ENCODE measurements at regions of chr4 and their contacts with region 1.

Region 1: GRCh38 chr4:26330186-26330787 is 9.5 kb downstream of the RBPJ start:
- DNase-seq: peak; percentile 53
- ATAC-seq: peak; percentile 82
- H3K4me3 ChIP-seq: no peak overlapping the region
- H3K27ac ChIP-seq: no peak overlapping the region
- H3K4me1 ChIP-seq: peaks cover 0 to 16% of the 10 kb centered on the region in 2 experiments; a peak in 2 of 4 replicates
- H3K27me3 ChIP-seq: no peaks in the 10 kb centered on the region
- CTCF ChIP-seq: peak; percentile 50 to 77 (median 54); a peak in 4 of 6 replicates
- POLR2A ChIP-seq: no peak
- RAD21 ChIP-seq: peak; percentile 64

Region 2: GRCh38 chr4:25925486-25926201 is 404.6 kb before region 1 on chr4:
- CTCF ChIA-PET with region 1: no interaction called
- POLR2A ChIA-PET with region 1: no interaction called
- RAD21 ChIA-PET with region 1: no interaction called
- intact Hi-C with region 1: loop called (anchors 10 kb)
- DNase-seq: peak; percentile 35
- ATAC-seq: peak; percentile 87
- H3K4me3 ChIP-seq: no peak overlapping the region
- H3K27ac ChIP-seq: no peak overlapping the region
- H3K4me1 ChIP-seq: no peaks in the 10 kb centered on the region
- H3K27me3 ChIP-seq: no peaks in the 10 kb centered on the region
- CTCF ChIP-seq: peak; percentile 43 to 72 (median 72); a peak in 5 of 6 replicates
- POLR2A ChIP-seq: no peak
- RAD21 ChIP-seq: peak; percentile 68

Region 3: DNA sequence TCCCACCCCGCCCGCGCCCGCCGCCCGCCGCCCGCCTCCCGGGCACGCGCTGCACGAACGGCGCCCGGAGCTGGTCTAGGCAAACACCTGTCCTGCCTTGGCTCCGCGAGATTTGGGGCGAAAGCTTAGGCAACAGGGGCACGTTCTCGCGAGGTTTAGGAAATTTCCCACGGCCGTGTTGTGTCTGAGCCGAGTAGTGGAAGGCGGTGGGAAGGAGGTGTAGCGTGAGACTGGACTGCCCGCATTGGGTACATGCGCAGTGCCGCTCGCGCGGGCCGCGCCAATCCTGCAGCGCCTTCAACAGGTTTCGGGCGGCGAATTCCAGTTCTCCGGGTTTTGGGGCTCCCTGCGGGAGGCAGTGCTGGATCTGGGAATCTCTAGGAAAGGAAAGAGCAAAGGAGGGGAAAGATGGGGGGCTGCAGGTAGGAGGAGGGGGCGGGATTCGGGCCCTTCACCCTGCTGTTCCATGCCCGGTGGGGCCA is 10.8 kb before region 1 on chr4:
- CTCF ChIA-PET with region 1: interaction called, 10 read pairs
- POLR2A ChIA-PET with region 1: interaction called, 3 read pairs
- RAD21 ChIA-PET with region 1: no interaction called
- intact Hi-C with region 1: no loop called
- DNase-seq: peak; percentile 99
- ATAC-seq: peak; percentile 78
- H3K4me3 ChIP-seq: peak overlapping the region; percentile 79 to 93
- H3K27ac ChIP-seq: peak overlapping the region; percentile 89
- H3K4me1 ChIP-seq: peaks cover 9 to 39% of the 10 kb centered on the region in 2 experiments; a peak in 3 of 4 replicates
- H3K27me3 ChIP-seq: no peaks in the 10 kb centered on the region
- CTCF ChIP-seq: no peak
- POLR2A ChIP-seq: no peak
- RAD21 ChIP-seq: no peak

Region 4: GRCh38 chr4:26342328-26343037 is 12.2 kb after region 1 on chr4:
- CTCF ChIA-PET with region 1: interaction called, 23 read pairs
- POLR2A ChIA-PET with region 1: no interaction called
- RAD21 ChIA-PET with region 1: no interaction called
- intact Hi-C with region 1: no loop called
- DNase-seq: peak; percentile 23
- ATAC-seq: peak; percentile 88
- H3K4me3 ChIP-seq: no peak overlapping the region
- H3K27ac ChIP-seq: no peak overlapping the region
- H3K4me1 ChIP-seq: peaks cover 8 to 31% of the 10 kb centered on the region in 2 experiments
- H3K27me3 ChIP-seq: no peaks in the 10 kb centered on the region
- CTCF ChIP-seq: no peak
- POLR2A ChIP-seq: no peak
- RAD21 ChIP-seq: no peak

Region 5: DNA sequence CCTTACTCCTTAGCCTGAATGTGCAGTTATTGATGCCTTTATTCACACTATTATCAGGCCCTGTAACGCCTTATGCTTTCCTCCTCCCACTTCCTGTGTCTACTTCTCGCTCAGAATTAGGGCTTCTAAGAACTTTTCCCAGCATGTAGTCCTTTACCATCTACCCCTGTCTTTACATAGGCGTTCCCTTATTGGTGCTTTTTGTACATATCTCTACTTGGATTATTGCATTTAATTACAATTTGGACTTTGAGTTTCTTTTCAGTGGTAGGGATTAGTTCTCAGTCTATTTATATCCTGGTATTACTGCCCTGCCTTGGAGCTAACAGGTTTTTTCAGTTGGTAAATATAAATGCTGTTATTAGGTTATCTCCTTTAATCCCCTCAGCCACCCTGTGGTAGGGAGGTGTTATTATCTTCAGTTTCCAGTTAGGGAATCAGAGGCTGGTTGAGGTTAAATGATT is 74.5 kb after region 1 on chr4:
- CTCF ChIA-PET with region 1: interaction called, 29 read pairs
- POLR2A ChIA-PET with region 1: no interaction called
- RAD21 ChIA-PET with region 1: interaction called in 1 of 2 experiments, 3 read pairs
- intact Hi-C with region 1: loop called (anchors 5 kb)
- DNase-seq: no peak
- ATAC-seq: no peak
- H3K4me3 ChIP-seq: no peak overlapping the region
- H3K27ac ChIP-seq: no peak overlapping the region
- H3K4me1 ChIP-seq: no peaks in the 10 kb centered on the region
- H3K27me3 ChIP-seq: no peaks in the 10 kb centered on the region
- CTCF ChIP-seq: no peak
- POLR2A ChIP-seq: no peak
- RAD21 ChIP-seq: no peak

Region 6: GRCh38 chr4:26719954-26720552 is 389.8 kb after region 1 on chr4:
- CTCF ChIA-PET with region 1: interaction called, 10 read pairs
- POLR2A ChIA-PET with region 1: no interaction called
- RAD21 ChIA-PET with region 1: no interaction called
- intact Hi-C with region 1: loop called (anchors 5 kb)
- DNase-seq: peak; percentile 8
- ATAC-seq: no peak
- H3K4me3 ChIP-seq: no peak overlapping the region
- H3K27ac ChIP-seq: no peak overlapping the region
- H3K4me1 ChIP-seq: peaks cover 0 to 10% of the 10 kb centered on the region in 2 experiments; a peak in 2 of 4 replicates
- H3K27me3 ChIP-seq: no peaks in the 10 kb centered on the region
- CTCF ChIP-seq: peak; percentile 47 to 86 (median 76); a peak in 5 of 6 replicates
- POLR2A ChIP-seq: no peak
- RAD21 ChIP-seq: peak; percentile 89

Region 7: DNA sequence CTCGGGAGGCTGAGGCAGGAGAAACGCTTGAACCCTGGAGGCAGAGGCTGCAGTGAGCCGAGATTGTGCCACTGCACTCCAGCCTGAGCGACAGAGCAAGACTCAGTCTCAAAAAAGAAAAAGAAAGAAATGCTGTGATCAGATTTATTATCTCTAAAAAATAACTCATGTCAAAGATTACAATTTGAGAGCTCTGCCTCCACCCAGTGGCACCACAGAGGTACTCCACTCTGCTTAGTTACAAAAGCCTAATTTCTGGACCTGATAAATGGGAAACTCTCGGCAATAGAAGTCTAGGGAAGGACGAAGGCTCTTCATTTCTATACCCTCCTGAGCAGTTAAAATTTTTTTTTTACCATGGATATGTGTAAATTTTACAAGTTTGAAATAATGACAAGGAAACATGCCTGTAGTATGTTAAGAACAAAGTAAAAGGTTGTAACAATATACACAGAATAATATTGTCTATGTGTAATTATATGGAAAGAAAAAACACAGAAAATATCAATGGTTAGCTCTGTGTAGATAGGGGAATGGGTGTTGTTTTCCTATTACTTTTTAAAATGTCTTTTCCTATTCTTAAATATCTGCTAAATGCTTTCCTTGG is 680.1 kb after region 1 on chr4:
- CTCF ChIA-PET with region 1: interaction called, 3 read pairs
- POLR2A ChIA-PET with region 1: no interaction called
- RAD21 ChIA-PET with region 1: no interaction called
- intact Hi-C with region 1: loop called (anchors 2 kb)
- DNase-seq: peak; percentile 43
- ATAC-seq: peak; percentile 90
- H3K4me3 ChIP-seq: no peak overlapping the region
- H3K27ac ChIP-seq: no peak overlapping the region
- H3K4me1 ChIP-seq: peaks cover 0 to 1% of the 10 kb centered on the region in 2 experiments; a peak in 1 of 4 replicates
- H3K27me3 ChIP-seq: no peaks in the 10 kb centered on the region
- CTCF ChIP-seq: peak; percentile 50 to 81 (median 77)
- POLR2A ChIP-seq: no peak
- RAD21 ChIP-seq: peak; percentile 85

Measured in HCT116 (cell line).